CD4-positive, alpha-beta memory T cell (primary cell): ENCODE measurements at regions of chr5 and their contacts with region 1.

Region 1: GRCh38 chr5:76175051-76175666 is 92.0 kb downstream of the SV2C start:
- DNase-seq: peak in 4 of 5 donors; percentile 41 to 54 (median 48)
- H3K4me3 ChIP-seq: peak overlapping the region in 1 of 2 donors; percentile 3
- H3K4me3 Mint-ChIP-seq: peak overlapping the region; percentile 56 to 88 (median 72)
- H3K27ac ChIP-seq: no peak overlapping the region
- H3K27ac Mint-ChIP-seq: peak overlapping the region; percentile 4 to 88 (median 82)
- H3K4me1 ChIP-seq: peaks cover 24% of the 10 kb centered on the region
- H3K4me1 Mint-ChIP-seq: peaks cover 16 to 20% (median 17%) of the 10 kb centered on the region in 4 donors
- H3K27me3 ChIP-seq: no peaks in the 10 kb centered on the region
- H3K27me3 Mint-ChIP-seq: no peaks in the 10 kb centered on the region

Region 2: DNA sequence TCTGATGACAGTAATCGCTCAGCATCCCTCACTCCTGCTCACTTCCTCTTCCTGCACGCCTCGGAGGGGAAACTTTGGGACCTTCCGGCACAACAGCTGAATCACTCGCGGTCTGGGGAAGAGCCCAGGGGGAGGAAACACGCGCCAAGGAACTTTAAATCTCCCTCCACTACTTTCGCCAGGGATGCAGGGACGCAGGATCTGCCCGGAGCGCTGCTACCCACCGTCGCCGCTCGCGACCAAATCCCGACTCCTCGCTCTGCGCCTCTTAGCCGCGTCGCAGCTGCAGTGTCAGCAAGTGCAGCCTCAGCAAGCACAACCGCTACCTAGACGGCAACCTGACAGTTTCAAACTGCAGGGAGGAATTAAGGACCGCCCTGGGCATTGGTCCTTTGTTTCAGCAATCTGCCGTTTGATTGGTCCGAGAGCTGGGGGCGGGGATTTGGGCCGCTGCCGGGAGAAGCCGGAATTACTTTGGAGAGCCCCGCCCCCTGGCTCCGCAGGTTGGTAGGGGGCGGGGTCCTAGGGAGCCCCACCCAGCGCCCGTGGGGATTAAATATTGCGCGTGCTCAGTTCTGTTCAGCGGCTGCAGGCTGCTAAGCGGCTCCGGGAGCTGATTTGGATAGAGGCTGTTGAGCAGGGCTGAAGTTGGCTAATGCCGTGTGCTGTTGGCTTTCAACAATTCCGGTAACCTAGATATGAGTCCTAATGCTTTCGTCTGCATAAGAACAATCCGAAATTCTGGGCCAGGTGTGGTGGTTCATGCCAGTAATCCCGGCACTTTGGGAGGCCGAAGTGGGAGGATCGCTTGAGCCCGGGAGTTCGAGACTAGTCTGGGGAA is 457.9 kb before region 1 on chr5 and contains the start of gene POC5:
- CTCF ChIA-PET with region 1: interaction called, 3 read pairs
- POLR2A ChIA-PET with region 1: no interaction called
- intact Hi-C with region 1: loop called (anchors 10 kb)
- DNase-seq: peak; percentile 98 to 99 (median 98)
- H3K4me3 ChIP-seq: peak within 1 kb of the TSS; percentile 74 to 95
- H3K4me3 Mint-ChIP-seq: peak within 1 kb of the TSS; percentile 99 to 100 (median 100)
- H3K27ac ChIP-seq: peak within 1 kb of the TSS; percentile 74
- H3K27ac Mint-ChIP-seq: peak within 1 kb of the TSS; percentile 98 to 100 (median 99)
- H3K4me1 ChIP-seq: peaks cover 18% of the 10 kb centered on the region
- H3K4me1 Mint-ChIP-seq: peaks cover 29 to 43% (median 36%) of the 10 kb centered on the region in 4 donors
- H3K27me3 ChIP-seq: no peaks in the 10 kb centered on the region
- H3K27me3 Mint-ChIP-seq: no peaks in the 10 kb centered on the region
- total RNA-seq, gene POC5: 15.1 to 20.0 TPM

Region 3: DNA sequence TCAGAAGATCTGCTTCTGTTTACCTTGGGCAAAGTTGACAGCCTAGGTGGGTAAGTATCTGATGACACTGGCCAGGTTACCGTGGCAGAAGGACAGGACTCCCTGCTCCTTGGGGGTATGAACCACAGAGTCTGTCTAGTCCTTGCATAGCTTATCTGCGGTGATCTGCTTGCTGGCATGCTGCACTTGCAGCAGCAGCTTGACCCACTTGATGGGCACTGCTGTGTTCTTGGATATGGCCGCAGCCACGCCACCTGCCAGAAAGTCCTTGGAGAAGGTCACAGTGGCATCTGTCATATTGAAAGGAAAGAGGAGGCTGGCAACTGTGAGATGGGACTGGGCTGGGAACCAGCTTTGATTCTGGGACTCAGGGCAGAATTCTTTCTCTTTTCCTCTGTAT is 422.0 kb before region 1 on chr5:
- CTCF ChIA-PET with region 1: no interaction called
- POLR2A ChIA-PET with region 1: no interaction called
- intact Hi-C with region 1: loop called (anchors 5 kb)
- DNase-seq: no peak
- H3K4me3 ChIP-seq: no peak overlapping the region
- H3K4me3 Mint-ChIP-seq: no peak overlapping the region
- H3K27ac ChIP-seq: no peak overlapping the region
- H3K27ac Mint-ChIP-seq: no peak overlapping the region
- H3K4me1 ChIP-seq: no peaks in the 10 kb centered on the region
- H3K4me1 Mint-ChIP-seq: no peaks in the 10 kb centered on the region
- H3K27me3 ChIP-seq: no peaks in the 10 kb centered on the region
- H3K27me3 Mint-ChIP-seq: peaks cover 10 to 18% of the 10 kb centered on the region in 2 donors

Region 4: GRCh38 chr5:75885849-75886598 is 289.1 kb before region 1 on chr5:
- CTCF ChIA-PET with region 1: interaction called, 25 read pairs
- POLR2A ChIA-PET with region 1: no interaction called
- intact Hi-C with region 1: no loop called
- DNase-seq: peak in 2 of 5 donors; percentile 0 to 4
- H3K4me3 ChIP-seq: no peak overlapping the region
- H3K4me3 Mint-ChIP-seq: no peak overlapping the region
- H3K27ac ChIP-seq: no peak overlapping the region
- H3K27ac Mint-ChIP-seq: no peak overlapping the region
- H3K4me1 ChIP-seq: no peaks in the 10 kb centered on the region
- H3K4me1 Mint-ChIP-seq: no peaks in the 10 kb centered on the region
- H3K27me3 ChIP-seq: no peaks in the 10 kb centered on the region
- H3K27me3 Mint-ChIP-seq: no peaks in the 10 kb centered on the region

Region 5: DNA sequence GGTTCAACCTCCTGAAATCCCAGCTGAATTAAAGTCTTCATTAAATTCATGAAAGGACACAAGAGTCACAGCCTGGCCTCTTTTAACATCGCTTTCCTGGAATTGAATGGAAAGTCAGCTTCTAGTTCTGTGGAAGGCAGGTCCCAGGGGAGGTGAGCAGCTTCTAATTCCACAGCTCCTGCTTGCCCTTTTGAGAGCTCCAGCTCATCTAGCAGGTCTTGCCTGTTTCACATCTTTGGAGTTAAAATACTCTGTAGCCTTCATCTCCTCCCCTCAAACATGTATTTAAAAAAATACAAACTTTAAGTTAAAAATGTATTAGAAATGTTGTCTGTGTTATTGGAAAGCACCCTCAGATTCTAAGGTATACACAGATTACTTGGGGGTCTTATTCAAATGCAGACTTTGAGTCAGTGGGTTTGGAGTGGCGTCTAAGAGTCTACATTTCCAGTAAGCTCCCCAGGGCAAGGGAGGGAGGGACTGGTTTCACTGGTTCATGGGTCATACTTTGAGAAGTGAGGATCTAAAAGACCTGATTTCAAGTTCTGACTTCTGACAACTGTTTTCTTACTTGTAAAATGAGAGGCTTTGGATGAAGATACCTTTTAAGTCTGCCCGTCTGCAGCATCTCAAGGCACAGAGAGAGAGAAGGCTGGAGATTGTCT is 16.8 kb after region 1 on chr5:
- CTCF ChIA-PET with region 1: interaction called, 16 read pairs
- POLR2A ChIA-PET with region 1: interaction called, 3 read pairs
- intact Hi-C with region 1: no loop called
- DNase-seq: no peak
- H3K4me3 ChIP-seq: no peak overlapping the region
- H3K4me3 Mint-ChIP-seq: no peak overlapping the region
- H3K27ac ChIP-seq: no peak overlapping the region
- H3K27ac Mint-ChIP-seq: peak overlapping the region in 1 of 7 donors; percentile 14
- H3K4me1 ChIP-seq: no peaks in the 10 kb centered on the region
- H3K4me1 Mint-ChIP-seq: no peaks in the 10 kb centered on the region
- H3K27me3 ChIP-seq: no peaks in the 10 kb centered on the region
- H3K27me3 Mint-ChIP-seq: peaks cover 0 to 5% of the 10 kb centered on the region in 2 donors